ENCODE measurements at regions of chr21 and their contacts with region 1.

Region 1: DNA sequence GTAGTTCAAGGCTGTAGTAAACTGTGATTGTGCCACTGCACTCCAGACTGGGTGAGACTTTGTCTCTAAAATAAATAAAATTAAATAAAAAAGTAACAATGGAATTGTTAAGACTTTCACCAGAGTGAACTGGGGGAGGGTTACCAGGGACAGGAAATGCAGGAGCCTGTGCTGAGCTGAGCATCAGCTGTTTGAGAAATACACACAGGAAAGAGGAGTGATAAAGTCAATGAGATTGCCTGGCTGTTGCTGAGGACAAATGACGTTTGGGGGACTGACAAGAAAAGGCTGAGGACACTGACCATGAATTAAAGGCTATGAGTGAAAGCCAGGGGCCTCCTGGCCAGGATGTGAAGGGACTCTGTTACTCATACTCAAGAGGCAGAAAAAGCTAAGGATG is 226.3 kb downstream of the SETD4 start:
- DNase-seq: no peak
- H3K4me3 ChIP-seq: no peak overlapping the region
- CTCF ChIP-seq: no peak

Region 2: DNA sequence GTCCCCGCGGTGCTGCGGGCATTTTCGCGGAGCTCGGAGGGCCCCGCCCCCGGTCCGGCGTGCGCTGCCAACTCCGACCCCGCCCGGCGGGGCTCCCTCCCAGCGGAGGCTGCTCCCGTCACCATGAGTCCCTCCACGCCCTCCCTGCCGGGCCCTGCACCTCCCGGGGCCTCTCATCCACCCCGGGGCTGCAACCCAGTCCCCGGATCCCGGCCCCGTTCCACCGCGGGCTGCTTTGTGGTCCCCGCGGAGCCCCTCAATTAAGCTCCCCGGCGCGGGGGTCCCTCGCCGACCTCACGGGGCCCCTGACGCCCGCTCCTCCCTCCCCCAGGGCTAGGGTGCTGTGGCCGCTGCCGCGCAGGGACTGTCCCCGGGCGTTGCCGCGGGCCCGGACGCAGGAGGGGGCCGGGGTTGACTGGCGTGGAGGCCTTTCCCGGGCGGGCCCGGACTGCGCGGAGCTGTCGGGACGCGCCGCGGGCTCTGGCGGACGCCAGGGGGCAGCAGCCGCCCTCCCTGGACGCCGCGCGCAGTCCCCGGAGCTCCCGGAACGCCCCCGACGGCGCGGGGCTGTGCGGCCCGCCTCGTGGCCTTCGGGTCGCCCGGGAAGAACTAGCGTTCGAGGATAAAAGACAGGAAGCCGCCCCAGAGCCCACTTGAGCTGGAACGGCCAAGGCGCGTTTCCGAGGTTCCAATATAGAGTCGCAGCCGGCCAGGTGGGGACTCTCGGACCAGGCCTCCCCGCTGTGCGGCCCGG is 944.1 kb before region 1 on chr21:
- in situ Hi-C with region 1: loop called (anchors 10 kb)
- DNase-seq: no peak
- H3K4me3 ChIP-seq: peak overlapping the region; percentile 89
- CTCF ChIP-seq: peak; percentile 57

Measured in astrocyte of the cerebellum (primary cell).